ENCODE measurements at regions of chr14 and their contacts with region 1.

Region 1: DNA sequence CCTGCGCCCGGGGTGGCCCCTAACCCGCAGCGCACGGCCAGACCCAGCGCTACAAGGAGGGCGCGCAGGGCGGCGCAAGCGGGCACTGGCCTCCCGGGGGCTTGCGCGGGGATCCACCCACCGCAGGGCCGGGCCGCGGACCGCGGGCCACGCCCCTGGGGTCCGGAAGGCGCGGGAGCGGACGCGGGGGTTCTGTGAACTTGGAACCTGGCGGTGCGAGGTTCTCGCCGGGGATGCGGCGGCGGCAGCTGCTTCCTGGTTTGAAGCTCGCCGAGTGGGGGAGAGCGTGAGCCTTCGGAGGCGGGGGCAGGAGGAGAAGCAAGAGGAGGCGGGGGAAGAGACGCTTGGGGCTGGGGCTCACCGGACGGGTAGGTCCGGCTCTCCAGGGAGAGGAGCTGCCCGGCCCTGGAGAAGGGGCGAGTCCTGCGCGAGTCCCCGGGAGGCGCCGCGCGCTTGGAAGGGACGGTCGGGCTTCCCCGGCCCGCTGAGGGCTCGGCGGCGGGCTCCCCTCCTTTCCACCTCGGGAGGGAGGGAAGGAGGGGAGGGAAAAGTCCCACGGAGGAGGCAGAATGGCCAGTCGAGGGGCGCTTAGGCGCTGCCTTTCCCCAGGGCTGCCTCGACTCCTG is at the start of gene PRKCH:
- DNase-seq: peak; percentile 87
- ATAC-seq: peak; percentile 75
- H3K4me3 Mint-ChIP-seq: peak within 1 kb of the TSS; percentile 99
- H3K27ac Mint-ChIP-seq: peak within 1 kb of the TSS; percentile 96
- H3K4me1 Mint-ChIP-seq: peaks cover 11% of the 10 kb centered on the region
- H3K27me3 Mint-ChIP-seq: no peaks in the 10 kb centered on the region
- total RNA-seq, gene PRKCH: 318 TPM

Region 2: DNA sequence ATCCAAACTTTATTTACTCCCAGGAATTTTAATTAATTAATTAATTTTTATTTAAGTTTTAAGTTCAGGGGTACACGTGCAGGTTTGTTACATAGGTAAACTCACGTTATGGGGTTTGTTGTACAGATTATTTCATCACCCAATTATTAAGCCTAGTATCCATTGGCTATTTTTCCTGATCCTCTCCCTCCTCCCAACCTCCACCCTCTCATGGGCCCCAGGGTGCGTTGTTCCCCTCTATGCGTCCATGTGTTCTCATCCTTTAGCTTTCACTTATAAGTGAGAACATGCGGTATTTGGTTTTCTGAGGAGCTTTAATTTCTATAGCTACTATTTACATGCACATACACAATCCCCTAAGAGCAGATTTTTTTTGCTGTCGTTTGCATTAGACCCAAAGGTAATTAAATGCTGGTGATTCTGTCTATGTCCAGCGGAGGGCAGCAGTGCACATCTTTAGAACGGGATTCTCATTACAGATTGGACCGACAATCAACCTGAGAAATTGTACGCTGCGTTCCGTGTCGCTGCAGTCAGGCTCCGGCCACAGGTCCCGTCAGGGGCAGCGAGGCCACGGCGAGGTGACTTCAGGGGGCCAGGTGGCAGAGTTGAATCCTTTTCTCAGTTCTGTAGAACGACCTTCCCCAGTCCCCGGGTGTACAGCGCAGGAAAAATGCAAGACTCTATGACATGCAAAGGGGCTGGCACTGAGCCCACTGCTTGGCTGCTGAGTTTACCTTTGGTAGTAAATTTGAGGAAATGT is 52.0 kb before region 1 on chr14:
- POLR2A ChIA-PET with region 1: no interaction called
- DNase-seq: peak; percentile 72
- ATAC-seq: peak; percentile 84
- H3K4me3 Mint-ChIP-seq: peak overlapping the region; percentile 70
- H3K27ac Mint-ChIP-seq: no peak overlapping the region
- H3K4me1 Mint-ChIP-seq: peaks cover 7% of the 10 kb centered on the region
- H3K27me3 Mint-ChIP-seq: peaks cover 52% of the 10 kb centered on the region

Region 3: DNA sequence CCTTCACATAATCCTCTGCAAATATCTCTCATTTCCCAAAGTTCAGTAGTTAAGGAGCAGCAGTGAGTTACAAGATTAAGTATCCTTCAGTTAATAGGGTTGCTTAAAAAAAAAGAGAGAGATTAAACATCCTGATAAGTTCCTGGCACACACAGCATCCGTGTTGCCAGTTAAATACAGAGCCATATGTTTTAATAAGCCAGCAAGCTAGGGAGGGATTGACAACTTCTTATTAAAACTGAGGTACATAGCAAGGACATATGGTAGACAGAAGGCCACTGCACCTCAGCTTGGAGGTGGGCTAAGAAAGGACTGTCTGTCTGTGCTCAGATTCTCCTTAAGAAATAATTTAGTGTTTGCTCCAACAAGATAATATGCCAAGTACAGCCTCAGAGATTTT is 30.8 kb before region 1 on chr14:
- POLR2A ChIA-PET with region 1: no interaction called
- DNase-seq: no peak
- ATAC-seq: no peak
- H3K4me3 Mint-ChIP-seq: no peak overlapping the region
- H3K27ac Mint-ChIP-seq: no peak overlapping the region
- H3K4me1 Mint-ChIP-seq: peaks cover 17% of the 10 kb centered on the region
- H3K27me3 Mint-ChIP-seq: peaks cover 2% of the 10 kb centered on the region

Region 4: DNA sequence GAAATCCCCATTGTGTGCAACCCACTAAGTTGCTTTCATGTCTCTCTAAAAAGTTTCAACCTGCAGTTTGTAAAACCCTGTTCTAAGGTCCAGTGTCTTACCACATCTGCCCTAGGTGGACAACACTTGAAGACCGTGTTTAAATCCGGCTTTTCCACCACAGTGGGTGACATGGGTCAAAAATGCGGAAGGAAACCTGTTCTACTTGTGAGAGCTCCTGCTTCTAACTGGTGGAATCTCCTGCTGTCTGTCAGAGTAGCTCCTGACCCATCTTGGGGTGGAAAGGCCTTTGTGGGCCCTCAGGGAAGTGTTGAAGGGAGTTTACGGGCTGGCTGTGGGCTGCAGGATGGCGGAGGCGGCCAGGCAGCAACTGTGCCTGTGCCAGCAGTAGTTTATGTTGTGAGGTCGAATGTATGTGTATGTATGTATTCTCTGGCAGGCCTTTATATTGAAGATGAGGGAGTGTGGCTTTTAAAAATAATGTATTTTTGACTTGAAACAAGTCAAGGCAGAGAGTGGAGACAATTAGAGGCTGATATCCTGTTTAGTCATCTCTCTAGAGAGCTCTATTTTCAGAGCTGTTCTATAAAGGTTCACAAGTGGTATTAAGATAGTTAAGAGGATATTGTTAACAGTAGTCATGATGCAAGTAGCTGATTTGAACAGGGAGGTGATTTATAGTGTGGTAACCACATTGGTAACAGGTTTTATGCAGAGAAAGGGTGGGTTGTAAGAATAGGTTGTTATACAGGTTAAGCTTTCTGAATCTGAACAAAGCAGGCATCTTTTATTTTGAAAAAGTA is 66.9 kb after region 1 on chr14:
- POLR2A ChIA-PET with region 1: interaction called, 11 read pairs
- DNase-seq: peak; percentile 53
- ATAC-seq: peak; percentile 60
- H3K4me3 Mint-ChIP-seq: no peak overlapping the region
- H3K27ac Mint-ChIP-seq: no peak overlapping the region
- H3K4me1 Mint-ChIP-seq: peaks cover 40% of the 10 kb centered on the region
- H3K27me3 Mint-ChIP-seq: no peaks in the 10 kb centered on the region

Region 5: GRCh38 chr14:61452452-61452851 is 131.0 kb after region 1 on chr14:
- POLR2A ChIA-PET with region 1: interaction called, 19 read pairs
- DNase-seq: peak; percentile 59
- ATAC-seq: peak; percentile 83
- H3K4me3 Mint-ChIP-seq: peak overlapping the region; percentile 79
- H3K27ac Mint-ChIP-seq: peak overlapping the region; percentile 92
- H3K4me1 Mint-ChIP-seq: peaks cover 92% of the 10 kb centered on the region
- H3K27me3 Mint-ChIP-seq: no peaks in the 10 kb centered on the region

Region 6: DNA sequence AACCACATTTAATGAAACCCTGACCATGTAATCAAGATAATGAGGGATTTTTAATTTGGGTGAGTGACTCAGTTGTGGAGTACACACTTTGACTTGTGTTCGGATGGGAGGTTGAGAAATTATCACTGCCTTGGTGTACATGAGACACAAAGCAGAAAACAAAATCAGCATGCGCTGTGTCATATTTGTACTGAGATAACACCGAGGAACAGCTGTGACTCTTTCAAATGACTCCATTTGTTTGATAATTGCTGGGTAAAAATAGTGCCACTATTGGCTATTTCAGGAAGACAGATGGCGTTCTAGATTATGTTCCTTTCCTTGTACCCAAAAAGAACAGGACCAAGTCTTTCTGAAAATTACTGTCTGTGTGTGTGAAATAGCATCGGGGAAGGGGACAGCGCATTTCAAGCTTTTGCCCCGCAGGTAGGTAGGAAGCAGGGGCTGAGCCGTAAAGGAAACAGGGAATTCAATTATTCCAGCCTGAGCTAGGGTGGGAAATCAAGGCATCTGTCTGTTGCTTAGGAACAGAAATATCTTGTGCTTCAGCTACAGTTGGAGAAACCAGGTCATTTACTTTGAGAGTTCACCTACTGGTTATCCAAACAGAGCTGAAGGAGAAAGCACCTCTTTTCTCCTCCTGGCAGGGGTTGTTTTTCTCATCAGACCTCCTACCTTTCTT is 555.0 kb after region 1 on chr14:
- POLR2A ChIA-PET with region 1: no interaction called
- DNase-seq: no peak
- ATAC-seq: no peak
- H3K4me3 Mint-ChIP-seq: no peak overlapping the region
- H3K27ac Mint-ChIP-seq: no peak overlapping the region
- H3K4me1 Mint-ChIP-seq: no peaks in the 10 kb centered on the region
- H3K27me3 Mint-ChIP-seq: peaks cover 70% of the 10 kb centered on the region